GM12878 (cell line): ENCODE measurements at regions of chr2 and their contacts with region 1.

Region 1: DNA sequence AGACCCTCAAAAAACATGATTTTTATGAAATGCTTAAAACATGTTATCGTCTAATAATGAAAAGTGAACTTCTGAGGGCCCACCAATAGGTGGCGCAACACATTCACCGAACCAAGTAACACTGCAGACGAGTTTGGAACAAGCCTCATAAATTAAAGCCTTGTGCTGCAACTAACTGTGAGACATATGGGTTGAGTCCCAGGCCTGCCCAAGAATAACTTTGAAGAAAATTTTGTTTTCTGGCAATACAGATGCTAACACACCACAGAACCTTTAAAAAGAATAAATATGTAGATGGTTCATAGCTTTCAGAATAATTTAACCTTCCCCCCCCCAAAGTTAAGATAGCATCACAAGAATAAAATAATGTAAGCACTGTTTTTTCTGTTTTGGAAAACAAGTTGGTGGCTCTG is 285.8 kb downstream of the RNF144A start:
- DNase-seq: peak; percentile 16
- ATAC-seq: peak; percentile 86
- H3K4me3 ChIP-seq: no peak overlapping the region
- H3K27ac ChIP-seq: no peak overlapping the region
- H3K4me1 ChIP-seq: no peaks in the 10 kb centered on the region
- H3K27me3 ChIP-seq: no peaks in the 10 kb centered on the region
- CTCF ChIP-seq: peak; percentile 77 to 96 (median 88)
- EP300 ChIP-seq: no peak
- POLR2A ChIP-seq: no peak
- RAD21 ChIP-seq: peak; percentile 85

Region 2: DNA sequence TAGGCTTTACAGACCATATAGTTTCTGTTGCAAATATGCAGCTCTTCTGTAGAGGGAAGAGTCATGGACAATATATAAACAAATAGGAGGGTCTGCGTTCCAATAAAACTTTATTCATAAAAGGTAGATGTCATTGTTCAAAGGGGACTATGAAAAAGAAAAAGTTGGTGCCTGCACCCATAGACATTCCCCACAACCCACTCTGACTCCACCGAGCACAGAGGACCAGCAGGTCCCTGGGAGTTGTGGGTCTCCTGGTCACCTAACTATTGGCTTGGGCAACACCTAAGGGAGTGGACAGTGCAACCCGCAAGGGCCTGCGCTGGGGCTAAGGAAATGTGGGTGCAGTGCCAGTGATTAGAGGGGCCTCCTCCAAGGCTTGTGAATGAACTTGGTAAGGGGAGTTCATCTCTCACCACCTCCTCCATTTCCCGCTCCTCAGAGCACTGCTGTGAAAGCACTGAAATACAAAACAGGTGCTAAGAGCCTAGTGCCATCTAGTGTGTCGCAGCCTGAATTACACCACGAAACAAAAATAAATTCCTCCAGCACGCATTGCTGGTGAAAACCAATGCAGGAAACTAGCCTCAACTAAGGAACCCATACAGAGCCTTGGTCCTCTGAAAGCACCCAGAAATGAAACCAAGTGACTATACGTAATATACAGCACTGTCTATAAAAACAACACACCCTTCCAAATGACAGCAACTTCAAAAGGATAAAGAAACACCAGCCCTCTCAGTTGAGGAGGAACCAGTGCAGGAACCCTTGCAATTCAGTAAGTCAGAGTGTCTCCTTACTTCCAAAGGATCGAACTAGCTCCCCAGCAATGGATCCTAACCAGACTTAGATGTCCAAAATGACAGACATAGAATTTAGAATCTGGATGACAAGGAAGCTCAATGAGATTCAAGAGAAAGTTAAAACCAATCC is 119.2 kb before region 1 on chr2:
- CTCF ChIA-PET with region 1: no interaction called
- POLR2A ChIA-PET with region 1: no interaction called
- RAD21 ChIA-PET with region 1: no interaction called
- SMC1A ChIA-PET with region 1: no interaction called
- in situ Hi-C with region 1: no loop called
- intact Hi-C with region 1: no loop called
- DNase-seq: no peak
- ATAC-seq: peak; percentile 78
- H3K4me3 ChIP-seq: no peak overlapping the region
- H3K27ac ChIP-seq: no peak overlapping the region
- H3K4me1 ChIP-seq: no peaks in the 10 kb centered on the region
- H3K27me3 ChIP-seq: peaks cover 0 to 3% of the 10 kb centered on the region in 2 experiments; a peak in 1 of 4 replicates
- CTCF ChIP-seq: peak; percentile 47 to 67 (median 51)
- EP300 ChIP-seq: no peak
- POLR2A ChIP-seq: no peak
- RAD21 ChIP-seq: peak; percentile 68

Region 3: GRCh38 chr2:7191932-7192331 is 11.1 kb before region 1 on chr2:
- CTCF ChIA-PET with region 1: interaction called, 11 read pairs
- POLR2A ChIA-PET with region 1: interaction called, 5 read pairs
- RAD21 ChIA-PET with region 1: interaction called, 4 read pairs
- SMC1A ChIA-PET with region 1: interaction called, 3 read pairs
- in situ Hi-C with region 1: no loop called
- intact Hi-C with region 1: no loop called
- DNase-seq: no peak
- ATAC-seq: no peak
- H3K4me3 ChIP-seq: no peak overlapping the region
- H3K27ac ChIP-seq: no peak overlapping the region
- H3K4me1 ChIP-seq: no peaks in the 10 kb centered on the region
- H3K27me3 ChIP-seq: no peaks in the 10 kb centered on the region
- CTCF ChIP-seq: no peak
- EP300 ChIP-seq: no peak
- POLR2A ChIP-seq: no peak
- RAD21 ChIP-seq: no peak

Region 4: GRCh38 chr2:7411691-7412090 is 208.6 kb after region 1 on chr2:
- CTCF ChIA-PET with region 1: interaction called, 3 read pairs
- POLR2A ChIA-PET with region 1: no interaction called
- RAD21 ChIA-PET with region 1: no interaction called
- SMC1A ChIA-PET with region 1: no interaction called
- in situ Hi-C with region 1: no loop called
- intact Hi-C with region 1: loop called (anchors 5 kb)
- DNase-seq: no peak
- ATAC-seq: peak; percentile 41; the same call in 2 of the 3 replicates
- H3K4me3 ChIP-seq: no peak overlapping the region
- H3K27ac ChIP-seq: no peak overlapping the region
- H3K4me1 ChIP-seq: no peaks in the 10 kb centered on the region
- H3K27me3 ChIP-seq: no peaks in the 10 kb centered on the region; a peak in 1 of 4 replicates
- CTCF ChIP-seq: no peak
- EP300 ChIP-seq: no peak
- POLR2A ChIP-seq: no peak
- RAD21 ChIP-seq: no peak

Region 5: GRCh38 chr2:8004250-8004681 is 801.2 kb after region 1 on chr2:
- CTCF ChIA-PET with region 1: no interaction called
- POLR2A ChIA-PET with region 1: no interaction called
- RAD21 ChIA-PET with region 1: no interaction called
- SMC1A ChIA-PET with region 1: no interaction called
- in situ Hi-C with region 1: no loop called
- intact Hi-C with region 1: loop called (anchors 10 kb)
- DNase-seq: no peak
- ATAC-seq: peak; percentile 46
- H3K4me3 ChIP-seq: no peak overlapping the region
- H3K27ac ChIP-seq: no peak overlapping the region
- H3K4me1 ChIP-seq: peaks cover 4% of the 10 kb centered on the region; the same call in 1 of the 2 replicates
- H3K27me3 ChIP-seq: no peaks in the 10 kb centered on the region
- CTCF ChIP-seq: no peak
- EP300 ChIP-seq: peak; percentile 69 to 79; a peak in 2 of 4 replicates
- POLR2A ChIP-seq: no peak
- RAD21 ChIP-seq: no peak